Mammary epithelial cell (primary cell): ENCODE measurements at regions of chr5 and their contacts with region 1.

Region 1: GRCh38 chr5:131796793-131797693 is at the start of gene FNIP1:
- DNase-seq: peak; percentile 97
- H3K4me3 ChIP-seq: peak within 1 kb of the TSS; percentile 93 to 97 (median 94)
- H3K27ac ChIP-seq: peak within 1 kb of the TSS; percentile 91
- H3K4me1 ChIP-seq: peaks cover 13% of the 10 kb centered on the region
- H3K27me3 ChIP-seq: no peaks in the 10 kb centered on the region
- CTCF ChIP-seq: no peak
- total RNA-seq, gene FNIP1: 27.3 to 69.2 TPM

Region 2: DNA sequence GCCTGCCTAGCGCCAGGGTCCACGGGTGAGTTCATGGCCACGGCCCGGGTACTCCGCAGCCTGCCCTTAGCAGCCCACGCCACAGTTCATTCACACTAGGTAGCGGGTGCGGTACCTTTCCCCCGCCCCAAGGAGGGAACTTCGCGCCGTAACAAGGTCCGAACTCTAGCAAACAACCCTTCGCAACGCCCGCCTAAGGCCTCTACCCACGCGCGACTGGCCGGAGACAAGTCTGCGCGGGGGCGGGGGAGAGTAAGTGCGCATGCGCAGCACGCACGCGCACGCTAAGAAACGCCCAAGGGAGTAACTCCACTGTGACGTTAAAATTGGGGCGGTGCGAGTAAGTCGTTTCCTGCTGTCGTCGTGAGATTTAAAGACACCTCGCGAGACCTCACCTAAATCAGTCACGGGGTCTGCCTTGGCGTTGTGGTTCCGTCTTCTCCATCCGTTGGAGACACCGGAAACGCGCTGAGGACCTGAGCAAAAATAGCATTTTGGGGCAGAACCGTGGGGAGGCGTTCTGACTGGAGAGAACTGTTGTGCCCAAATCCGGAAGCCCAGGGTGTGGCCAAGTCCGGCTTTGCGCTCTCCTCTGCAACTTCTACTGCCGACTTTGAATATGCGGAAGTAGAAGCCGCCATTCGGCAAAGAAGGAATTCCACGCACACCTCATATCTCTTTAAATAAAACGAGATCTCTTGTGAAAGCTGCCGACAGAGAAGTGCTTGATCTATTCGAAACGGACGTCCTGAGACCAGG is 161.9 kb before region 1 on chr5 and contains the start of gene RAPGEF6:
- CTCF ChIA-PET with region 1: no interaction called
- dilution Hi-C with region 1: no loop called
- in situ Hi-C with region 1: no loop called
- intact Hi-C with region 1: loop called (anchors 1 kb)
- DNase-seq: peak; percentile 100
- H3K4me3 ChIP-seq: peak within 1 kb of the TSS; percentile 77 to 88 (median 83)
- H3K27ac ChIP-seq: peak within 1 kb of the TSS; percentile 97
- H3K4me1 ChIP-seq: peaks cover 24% of the 10 kb centered on the region
- H3K27me3 ChIP-seq: no peaks in the 10 kb centered on the region
- CTCF ChIP-seq: no peak
- total RNA-seq, gene RAPGEF6: 14.4 to 14.8 TPM

Region 3: GRCh38 chr5:131693894-131694293 is 103.1 kb before region 1 on chr5:
- CTCF ChIA-PET with region 1: no interaction called
- dilution Hi-C with region 1: no loop called
- in situ Hi-C with region 1: no loop called
- intact Hi-C with region 1: loop called (anchors 10 kb)
- DNase-seq: no peak
- H3K4me3 ChIP-seq: no peak overlapping the region
- H3K27ac ChIP-seq: no peak overlapping the region
- H3K4me1 ChIP-seq: no peaks in the 10 kb centered on the region
- H3K27me3 ChIP-seq: no peaks in the 10 kb centered on the region
- CTCF ChIP-seq: no peak

Region 4: DNA sequence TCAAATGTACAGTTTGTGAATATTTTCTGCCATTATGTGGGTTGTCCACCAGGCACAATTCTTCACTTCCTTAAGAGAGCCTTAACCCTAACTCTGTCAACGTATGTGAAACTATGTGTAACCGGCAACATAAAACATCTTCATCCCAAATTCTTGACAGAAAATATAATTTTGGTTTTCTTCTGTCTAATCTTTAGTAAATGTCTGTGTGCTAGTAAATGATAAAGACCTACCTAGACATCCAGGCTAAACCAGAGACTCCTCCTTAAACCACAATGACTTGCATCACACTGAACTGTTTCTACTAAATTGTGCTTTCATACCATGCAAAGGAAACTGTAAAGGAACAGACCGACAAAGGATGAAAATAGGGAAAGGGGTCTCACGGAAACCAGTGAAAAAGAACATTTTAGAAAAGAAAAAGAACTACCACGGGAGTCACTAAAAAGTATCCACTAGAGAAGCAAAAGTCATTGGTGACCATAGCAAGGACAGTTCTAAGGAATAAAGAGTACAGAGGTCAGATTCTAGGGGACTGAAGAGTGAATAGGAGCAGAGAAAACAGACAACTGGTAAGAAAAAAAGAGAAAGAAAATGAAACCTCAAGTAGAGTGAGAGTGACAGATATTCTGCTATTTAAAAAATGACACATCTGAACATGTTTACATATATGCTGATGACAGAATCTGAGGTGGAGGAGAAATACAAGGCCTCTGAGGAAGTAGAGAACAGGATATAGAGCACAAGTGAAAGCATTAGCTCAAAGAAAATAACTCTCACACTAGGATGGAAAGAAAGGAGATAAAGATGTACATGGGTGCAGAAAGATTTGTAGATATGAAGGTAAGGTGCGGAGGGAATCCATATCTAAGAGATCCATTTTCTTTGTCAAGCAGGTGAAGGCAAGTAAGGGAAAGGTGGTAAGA is 49.6 kb before region 1 on chr5:
- CTCF ChIA-PET with region 1: no interaction called
- dilution Hi-C with region 1: no loop called
- in situ Hi-C with region 1: no loop called
- intact Hi-C with region 1: loop called (anchors 5 kb)
- DNase-seq: peak; percentile 38
- H3K4me3 ChIP-seq: no peak overlapping the region
- H3K27ac ChIP-seq: no peak overlapping the region
- H3K4me1 ChIP-seq: peaks cover 18% of the 10 kb centered on the region
- H3K27me3 ChIP-seq: no peaks in the 10 kb centered on the region
- CTCF ChIP-seq: no peak